PC-9 (cell line): ENCODE measurements at regions of chr1 and their contacts with region 1.

Region 1: DNA sequence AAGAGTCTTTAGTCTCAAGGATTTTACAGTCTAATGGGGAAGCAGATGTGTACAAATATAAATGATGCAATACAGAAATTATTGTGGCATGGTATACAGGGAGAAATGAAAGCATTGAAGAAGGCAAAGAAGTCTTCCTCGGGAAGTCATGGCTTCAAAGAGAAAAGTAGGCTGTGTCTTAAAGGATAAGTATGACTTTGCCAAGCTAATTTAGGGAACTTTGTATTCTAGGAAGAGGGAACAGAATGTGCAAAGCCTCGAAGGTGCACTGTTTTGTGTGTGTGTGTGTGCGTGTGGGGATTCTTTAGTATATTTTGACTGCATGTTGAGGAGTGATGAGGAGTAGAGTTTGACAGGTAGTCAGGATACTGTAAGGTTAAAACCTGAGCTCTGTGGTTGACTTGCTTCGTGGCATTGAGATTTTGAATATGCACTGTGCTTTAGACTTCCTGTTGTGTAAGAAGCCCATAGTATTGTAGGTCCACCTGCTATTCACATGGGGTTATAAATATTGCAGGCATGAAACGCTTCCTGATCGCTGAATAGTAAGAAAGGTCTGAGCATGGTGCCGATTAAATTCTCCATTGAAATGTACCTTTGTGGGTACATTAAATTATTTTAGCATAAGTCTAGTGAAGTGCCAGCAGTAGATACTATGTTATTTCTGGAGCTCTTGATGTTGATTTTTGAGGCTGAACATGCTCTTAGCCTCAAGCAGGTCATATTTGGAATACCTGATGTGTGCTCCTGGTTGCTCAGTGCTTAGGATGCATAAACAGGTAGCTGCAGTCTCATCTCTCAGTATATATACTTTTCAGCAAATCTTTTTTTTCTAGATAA is 8.0 kb downstream of the SMAP2 start:
- DNase-seq: no peak
- H3K4me3 ChIP-seq: no peak overlapping the region
- H3K27ac ChIP-seq: no peak overlapping the region
- H3K4me1 ChIP-seq: no peaks in the 10 kb centered on the region
- H3K27me3 ChIP-seq: no peaks in the 10 kb centered on the region
- CTCF ChIP-seq: no peak

Region 2: GRCh38 chr1:40352126-40352525 is 29.4 kb before region 1 on chr1:
- CTCF ChIA-PET with region 1: no interaction called
- POLR2A ChIA-PET with region 1: no interaction called
- intact Hi-C with region 1: no loop called
- DNase-seq: no peak
- H3K4me3 ChIP-seq: no peak overlapping the region
- H3K27ac ChIP-seq: no peak overlapping the region
- H3K4me1 ChIP-seq: no peaks in the 10 kb centered on the region
- H3K27me3 ChIP-seq: no peaks in the 10 kb centered on the region
- CTCF ChIP-seq: no peak

Region 3: GRCh38 chr1:40363721-40364120 is 17.8 kb before region 1 on chr1:
- CTCF ChIA-PET with region 1: no interaction called
- POLR2A ChIA-PET with region 1: interaction called, 11 read pairs
- intact Hi-C with region 1: no loop called
- DNase-seq: no peak
- H3K4me3 ChIP-seq: no peak overlapping the region
- H3K27ac ChIP-seq: no peak overlapping the region
- H3K4me1 ChIP-seq: no peaks in the 10 kb centered on the region
- H3K27me3 ChIP-seq: peaks cover 7% of the 10 kb centered on the region
- CTCF ChIP-seq: no peak

Region 4: GRCh38 chr1:40553017-40553416 is 171.5 kb after region 1 on chr1:
- CTCF ChIA-PET with region 1: no interaction called
- POLR2A ChIA-PET with region 1: no interaction called
- intact Hi-C with region 1: no loop called
- DNase-seq: no peak
- H3K4me3 ChIP-seq: no peak overlapping the region
- H3K27ac ChIP-seq: no peak overlapping the region
- H3K4me1 ChIP-seq: no peaks in the 10 kb centered on the region
- H3K27me3 ChIP-seq: no peaks in the 10 kb centered on the region
- CTCF ChIP-seq: no peak